Panc1 (cell line): ENCODE measurements at regions of chr9 and their contacts with region 1.

Region 1: GRCh38 chr9:113484258-113484730 is 20.8 kb downstream of the RGS3 start:
- DNase-seq: no peak
- ATAC-seq: no peak
- H3K4me3 ChIP-seq: no peak overlapping the region
- H3K27ac ChIP-seq: no peak overlapping the region
- H3K4me1 ChIP-seq: no peaks in the 10 kb centered on the region
- H3K27me3 ChIP-seq: no peaks in the 10 kb centered on the region
- CTCF ChIP-seq: no peak

Region 2: DNA sequence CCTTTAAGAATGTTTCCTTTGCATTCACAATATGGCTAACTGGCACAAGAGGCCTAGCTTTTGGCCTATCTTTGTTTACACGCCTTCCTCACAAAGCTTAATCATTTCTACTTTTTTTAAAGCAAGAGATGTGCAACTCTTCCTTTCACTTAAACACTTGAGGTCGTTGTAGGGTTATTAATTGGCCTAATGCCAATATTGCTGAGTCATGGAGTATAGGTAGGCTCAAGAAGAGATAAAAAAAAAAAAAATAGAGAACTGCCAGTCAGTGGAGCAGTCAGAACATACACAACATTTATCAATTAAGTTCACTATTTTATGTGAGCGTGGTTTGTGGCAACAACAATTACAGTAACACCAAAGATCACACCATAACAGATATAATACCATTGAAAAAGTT is 269.2 kb before region 1 on chr9:
- CTCF ChIA-PET with region 1: no interaction called
- POLR2A ChIA-PET with region 1: no interaction called
- in situ Hi-C with region 1: no loop called
- intact Hi-C with region 1: no loop called
- DNase-seq: no peak
- ATAC-seq: no peak
- H3K4me3 ChIP-seq: no peak overlapping the region
- H3K27ac ChIP-seq: no peak overlapping the region
- H3K4me1 ChIP-seq: no peaks in the 10 kb centered on the region; the same call in 1 of the 2 replicates
- H3K27me3 ChIP-seq: no peaks in the 10 kb centered on the region
- CTCF ChIP-seq: no peak

Region 3: DNA sequence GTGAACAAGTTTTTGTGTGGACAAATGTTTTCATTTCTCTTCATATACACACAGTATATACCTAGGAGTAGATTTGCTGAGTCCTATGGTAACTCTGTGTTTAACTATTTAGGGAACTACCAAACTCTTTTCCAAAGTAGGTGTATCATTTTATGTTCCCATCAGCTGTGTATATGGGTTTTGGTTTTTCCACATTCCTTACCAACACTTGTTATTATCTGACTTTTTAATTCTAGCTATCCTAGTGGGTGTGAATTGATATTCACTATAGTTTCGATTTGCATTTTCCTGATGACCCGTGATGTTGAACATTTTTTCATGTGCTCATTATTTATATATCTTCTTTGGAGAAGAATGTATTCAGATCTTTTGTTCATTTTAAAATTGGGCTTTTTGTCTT is 17.1 kb before region 1 on chr9:
- CTCF ChIA-PET with region 1: no interaction called
- POLR2A ChIA-PET with region 1: interaction called, 10 read pairs
- in situ Hi-C with region 1: no loop called
- intact Hi-C with region 1: no loop called
- DNase-seq: no peak
- ATAC-seq: no peak
- H3K4me3 ChIP-seq: no peak overlapping the region
- H3K27ac ChIP-seq: no peak overlapping the region
- H3K4me1 ChIP-seq: peaks cover 22% of the 10 kb centered on the region
- H3K27me3 ChIP-seq: no peaks in the 10 kb centered on the region
- CTCF ChIP-seq: no peak